ENCODE measurements at regions of chr9 and their contacts with region 1.

Region 1: DNA sequence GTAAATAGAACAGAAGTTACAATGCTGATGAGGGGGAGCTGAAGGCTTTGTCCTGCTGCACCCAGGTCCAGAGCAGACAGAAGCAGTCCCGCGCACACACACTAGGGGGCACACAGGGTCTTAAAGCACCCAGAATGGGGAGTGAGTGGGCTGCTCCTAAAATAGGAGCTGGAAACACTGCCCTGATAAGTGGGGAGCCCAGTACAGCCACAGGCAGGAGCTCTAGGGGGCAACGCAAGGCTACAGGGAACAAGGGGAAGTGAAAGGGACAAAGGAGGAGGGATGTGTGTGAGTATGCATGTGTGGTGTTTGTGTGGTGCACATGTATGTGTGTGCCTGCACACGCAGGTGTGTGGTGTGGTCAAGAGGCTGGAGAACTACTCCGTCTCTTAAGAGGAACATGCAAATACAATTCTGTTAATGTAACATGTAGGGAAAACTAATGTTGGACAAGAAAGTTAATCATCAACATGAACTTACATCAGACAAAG is 191.5 kb downstream of the ROR2 start:
- DNase-seq: no peak
- H3K4me3 ChIP-seq: no peak overlapping the region
- CTCF ChIP-seq: peak; percentile 83

Region 2: DNA sequence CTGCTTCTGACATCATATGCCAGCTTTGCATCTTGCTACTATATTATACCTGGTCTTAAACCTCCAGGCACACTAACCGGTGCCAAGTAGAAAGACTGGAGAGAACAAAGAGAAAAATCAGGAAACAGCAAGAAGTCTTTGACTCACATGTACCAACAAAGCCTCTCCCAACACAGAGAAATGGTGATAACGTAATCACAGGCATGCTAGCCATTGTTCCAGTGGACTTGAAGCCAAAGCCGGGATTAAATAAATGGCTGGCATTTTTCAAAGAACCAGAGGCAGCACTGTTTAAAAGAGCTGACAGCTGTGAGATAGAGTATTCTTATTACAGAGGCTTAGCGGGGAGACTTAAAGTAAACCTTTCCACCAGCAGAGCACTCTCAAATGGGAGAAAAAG is 186.5 kb before region 1 on chr9:
- CTCF ChIA-PET with region 1: no interaction called
- POLR2A ChIA-PET with region 1: no interaction called
- DNase-seq: no peak
- H3K4me3 ChIP-seq: no peak overlapping the region
- CTCF ChIP-seq: no peak

Region 3: GRCh38 chr9:91740701-91741100 is 17.8 kb before region 1 on chr9:
- CTCF ChIA-PET with region 1: interaction called, 17 read pairs
- POLR2A ChIA-PET with region 1: no interaction called
- DNase-seq: peak; percentile 36
- H3K4me3 ChIP-seq: no peak overlapping the region
- CTCF ChIP-seq: peak; percentile 38

Region 4: DNA sequence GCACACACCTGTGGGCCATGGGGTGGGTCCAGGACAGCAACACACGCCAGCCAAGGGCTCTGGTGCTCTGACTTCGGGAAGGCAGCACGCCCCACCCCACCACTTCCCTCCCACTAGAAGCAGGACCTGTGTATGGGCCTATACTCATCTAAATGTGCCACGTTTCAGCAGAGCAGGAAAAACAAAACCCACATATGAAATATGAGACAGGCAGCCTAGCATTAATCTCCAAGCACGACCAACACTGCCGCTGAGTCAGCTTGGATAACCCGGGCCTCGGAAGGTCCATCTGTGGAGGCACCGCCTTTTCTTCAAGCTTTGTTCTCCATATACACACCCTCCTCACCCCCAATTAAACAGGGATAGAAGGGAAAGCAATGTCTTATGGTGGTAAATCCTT is 11.6 kb before region 1 on chr9:
- CTCF ChIA-PET with region 1: interaction called, 17 read pairs
- POLR2A ChIA-PET with region 1: no interaction called
- DNase-seq: no peak
- H3K4me3 ChIP-seq: no peak overlapping the region
- CTCF ChIP-seq: no peak

Region 5: GRCh38 chr9:91775011-91775707 is 16.6 kb after region 1 on chr9:
- CTCF ChIA-PET with region 1: interaction called, 49 read pairs
- POLR2A ChIA-PET with region 1: no interaction called
- DNase-seq: no peak
- H3K4me3 ChIP-seq: no peak overlapping the region
- CTCF ChIP-seq: peak; percentile 92

Region 6: DNA sequence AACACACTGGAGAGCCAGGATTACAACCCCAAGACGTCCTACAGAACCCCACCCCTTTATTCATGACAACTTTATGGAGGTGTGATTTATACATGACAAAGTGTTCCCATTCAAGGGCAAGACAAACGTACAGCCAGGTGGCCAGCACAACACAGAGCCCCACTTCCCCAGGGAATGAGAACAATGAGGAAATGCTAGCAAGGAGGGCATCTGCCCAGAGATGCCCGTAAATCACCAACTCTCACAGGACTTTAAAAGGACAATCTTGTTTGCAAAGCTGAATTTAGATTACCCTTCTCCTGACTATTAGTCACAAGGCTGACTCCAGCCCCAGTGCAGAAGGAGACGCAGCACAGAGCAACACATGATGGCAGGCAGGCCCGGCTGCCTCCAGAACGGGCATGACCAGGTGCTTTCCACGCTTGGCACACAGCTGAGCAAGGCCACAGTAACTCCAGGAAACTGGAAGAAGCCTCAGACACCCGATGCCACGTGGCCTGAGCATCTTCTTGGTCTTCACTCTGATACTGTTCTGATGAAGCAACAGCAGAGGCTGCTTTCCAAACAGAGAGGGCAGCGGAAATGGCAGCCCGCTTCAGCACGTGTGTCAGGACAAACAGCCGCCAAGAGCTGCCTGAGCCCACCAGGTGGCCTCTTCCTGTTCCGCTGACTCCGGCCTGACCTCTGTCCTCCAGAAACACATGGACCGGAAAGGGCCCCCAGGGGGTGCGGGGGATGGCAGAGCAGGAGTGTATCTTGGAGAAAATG is 140.1 kb after region 1 on chr9:
- CTCF ChIA-PET with region 1: no interaction called
- POLR2A ChIA-PET with region 1: no interaction called
- DNase-seq: no peak
- H3K4me3 ChIP-seq: no peak overlapping the region
- CTCF ChIP-seq: no peak

Region 7: GRCh38 chr9:91978739-91979414 is 220.3 kb after region 1 on chr9:
- CTCF ChIA-PET with region 1: interaction called, 13 read pairs
- POLR2A ChIA-PET with region 1: no interaction called
- DNase-seq: peak; percentile 87
- H3K4me3 ChIP-seq: no peak overlapping the region
- CTCF ChIP-seq: peak; percentile 43